ENCODE measurements at regions of chr15 and their contacts with region 1.

Region 1: DNA sequence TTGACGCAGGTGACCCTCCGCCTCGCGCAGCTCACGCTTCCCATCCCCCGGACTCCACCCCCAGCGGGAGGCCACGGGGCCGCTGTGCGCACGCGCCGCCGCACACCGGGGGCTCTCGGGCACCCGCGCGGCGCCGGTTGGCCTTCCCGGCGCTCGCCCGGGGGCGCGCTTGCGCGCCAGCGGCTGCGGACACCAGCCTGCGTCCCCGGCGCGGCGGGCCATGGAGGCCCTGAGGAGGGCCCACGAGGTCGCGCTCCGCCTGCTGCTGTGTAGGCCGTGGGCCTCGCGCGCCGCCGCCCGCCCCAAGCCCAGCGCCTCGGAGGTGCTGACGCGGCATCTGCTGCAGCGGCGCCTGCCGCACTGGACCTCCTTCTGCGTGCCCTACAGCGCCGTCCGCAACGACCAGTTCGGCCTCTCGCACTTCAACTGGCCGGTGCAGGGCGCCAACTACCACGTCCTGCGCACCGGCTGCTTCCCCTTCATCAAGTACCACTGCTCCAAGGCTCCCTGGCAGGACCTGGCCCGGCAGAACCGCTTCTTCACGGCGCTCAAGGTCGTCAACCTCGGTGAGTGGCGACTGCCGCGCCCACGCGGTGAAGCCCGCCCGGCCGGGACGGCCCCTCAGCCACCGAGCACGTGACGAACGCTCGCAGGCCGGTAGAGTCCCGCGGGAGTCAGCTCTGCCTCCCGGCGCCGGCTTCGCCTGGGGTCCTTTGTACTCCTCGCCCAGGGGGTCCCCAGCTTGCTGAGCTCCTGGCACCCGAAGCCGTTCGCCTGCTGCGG is at the start of gene C15orf61:
- DNase-seq: peak; percentile 89 to 97
- ATAC-seq: peak; percentile 88 to 91
- H3K4me3 ChIP-seq: peak within 1 kb of the TSS; percentile 94
- H3K27ac ChIP-seq: peak within 1 kb of the TSS; percentile 90 to 91
- H3K4me1 ChIP-seq: peaks cover 26% of the 10 kb centered on the region; the same call in 2 of the 3 replicates
- CTCF ChIP-seq: peak; percentile 28; the same call in 2 of the 3 replicates
- EP300 ChIP-seq: no peak
- POLR2A ChIP-seq: peak; percentile 84
- RAD21 ChIP-seq: peak in 1 of 2 experiments; percentile 31; a peak in 1 of 5 replicates
- polyA plus RNA-seq, gene C15orf61: 3.7 and 5.9 TPM in 2 replicates

Region 2: GRCh38 chr15:67542420-67543347 is 21.5 kb after region 1 on chr15 and contains the start of gene MAP2K5:
- CTCF ChIA-PET with region 1: interaction called, 3 read pairs
- POLR2A ChIA-PET with region 1: interaction called, 21 read pairs
- DNase-seq: peak; percentile 74 to 77
- ATAC-seq: peak; percentile 90 to 94
- H3K4me3 ChIP-seq: peak within 1 kb of the TSS; percentile 56
- H3K27ac ChIP-seq: peak within 1 kb of the TSS; percentile 73 to 91
- H3K4me1 ChIP-seq: peaks cover 14% of the 10 kb centered on the region
- CTCF ChIP-seq: no peak
- EP300 ChIP-seq: no peak
- POLR2A ChIP-seq: peak; percentile 85
- RAD21 ChIP-seq: no peak; a peak in 1 of 5 replicates
- polyA plus RNA-seq, gene MAP2K5: 7.8 and 9.2 TPM in 2 replicates

Region 3: GRCh38 chr15:67587754-67588153 is 66.5 kb after region 1 on chr15:
- CTCF ChIA-PET with region 1: no interaction called
- POLR2A ChIA-PET with region 1: no interaction called
- DNase-seq: no peak
- ATAC-seq: no peak; a peak in 1 of 6 replicates
- H3K4me3 ChIP-seq: no peak overlapping the region
- H3K27ac ChIP-seq: no peak overlapping the region
- H3K4me1 ChIP-seq: no peaks in the 10 kb centered on the region
- CTCF ChIP-seq: no peak
- EP300 ChIP-seq: no peak
- POLR2A ChIP-seq: no peak
- RAD21 ChIP-seq: no peak

Measured in A549 (cell line).